Body of pancreas (tissue), 4 donors: ENCODE measurements at regions of chr11 and their contacts with region 1.

Region 1: GRCh38 chr11:81644239-81644840 is 1089.3 kb downstream of the FAM181B start:
- DNase-seq: peak in 2 of 4 donors; percentile 11 to 16
- ATAC-seq: peak; percentile 55
- H3K4me3 ChIP-seq: no peak overlapping the region
- H3K27ac ChIP-seq: no peak overlapping the region
- H3K4me1 ChIP-seq: no peaks in the 10 kb centered on the region
- H3K27me3 ChIP-seq: no peaks in the 10 kb centered on the region
- CTCF ChIP-seq: peak in 6 of 7 experiments; percentile 43 to 62 (median 54)
- POLR2A ChIP-seq: no peak

Region 2: GRCh38 chr11:82698576-82699352 is 1054.4 kb after region 1 on chr11:
- intact Hi-C with region 1: loop called (anchors 10 kb)
- DNase-seq: no peak
- ATAC-seq: no peak
- H3K4me3 ChIP-seq: no peak overlapping the region
- H3K27ac ChIP-seq: no peak overlapping the region
- H3K4me1 ChIP-seq: no peaks in the 10 kb centered on the region
- H3K27me3 ChIP-seq: no peaks in the 10 kb centered on the region
- CTCF ChIP-seq: no peak
- POLR2A ChIP-seq: no peak